Activated CD4-positive, alpha-beta T cell treated with anti-CD3 and anti-CD28 coated beads, Interleukin-2, amount 10 ng/mL, durations not matched to agents 7 days and 5 days (primary cell): ENCODE measurements at regions of chr17 and their contacts with region 1.

Region 1: DNA sequence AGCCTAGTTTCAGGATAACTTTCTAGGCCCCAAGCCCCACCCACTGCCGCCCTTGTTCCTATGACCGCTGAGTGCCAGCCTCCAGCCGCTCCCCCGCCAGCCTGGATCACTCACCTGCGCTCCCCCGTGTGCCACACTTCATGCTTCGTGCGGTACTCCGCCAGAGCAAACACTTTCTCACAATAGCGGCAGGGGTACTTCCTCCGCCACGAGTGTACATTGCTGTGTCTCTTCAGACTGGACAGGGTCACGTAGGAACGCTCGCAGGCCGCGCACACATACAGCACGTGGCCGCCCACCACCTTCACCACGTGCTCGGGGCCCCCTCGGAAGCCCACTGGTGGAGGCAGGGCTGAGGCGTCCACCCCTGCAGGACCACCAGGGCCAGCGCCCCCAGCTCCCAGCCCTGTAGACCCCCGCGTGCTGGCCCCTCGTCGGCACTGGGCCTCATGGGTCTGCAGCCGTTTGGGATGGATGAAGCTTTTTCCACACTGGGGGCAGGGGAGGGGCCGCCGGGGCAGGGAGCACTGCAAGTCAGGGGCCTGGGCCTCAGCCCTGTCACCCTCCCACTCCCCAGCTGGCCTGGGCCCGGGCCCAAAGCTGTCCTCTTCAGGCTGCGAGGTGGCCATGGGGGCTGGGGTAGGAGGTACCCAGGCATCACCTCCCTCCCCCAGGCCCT is 13.7 kb downstream of the ZBTB4 start:
- DNase-seq: no peak
- H3K4me3 Mint-ChIP-seq: no peak overlapping the region
- H3K27ac Mint-ChIP-seq: no peak overlapping the region
- H3K4me1 Mint-ChIP-seq: peaks cover 16% of the 10 kb centered on the region
- H3K27me3 Mint-ChIP-seq: no peaks in the 10 kb centered on the region

Region 2: DNA sequence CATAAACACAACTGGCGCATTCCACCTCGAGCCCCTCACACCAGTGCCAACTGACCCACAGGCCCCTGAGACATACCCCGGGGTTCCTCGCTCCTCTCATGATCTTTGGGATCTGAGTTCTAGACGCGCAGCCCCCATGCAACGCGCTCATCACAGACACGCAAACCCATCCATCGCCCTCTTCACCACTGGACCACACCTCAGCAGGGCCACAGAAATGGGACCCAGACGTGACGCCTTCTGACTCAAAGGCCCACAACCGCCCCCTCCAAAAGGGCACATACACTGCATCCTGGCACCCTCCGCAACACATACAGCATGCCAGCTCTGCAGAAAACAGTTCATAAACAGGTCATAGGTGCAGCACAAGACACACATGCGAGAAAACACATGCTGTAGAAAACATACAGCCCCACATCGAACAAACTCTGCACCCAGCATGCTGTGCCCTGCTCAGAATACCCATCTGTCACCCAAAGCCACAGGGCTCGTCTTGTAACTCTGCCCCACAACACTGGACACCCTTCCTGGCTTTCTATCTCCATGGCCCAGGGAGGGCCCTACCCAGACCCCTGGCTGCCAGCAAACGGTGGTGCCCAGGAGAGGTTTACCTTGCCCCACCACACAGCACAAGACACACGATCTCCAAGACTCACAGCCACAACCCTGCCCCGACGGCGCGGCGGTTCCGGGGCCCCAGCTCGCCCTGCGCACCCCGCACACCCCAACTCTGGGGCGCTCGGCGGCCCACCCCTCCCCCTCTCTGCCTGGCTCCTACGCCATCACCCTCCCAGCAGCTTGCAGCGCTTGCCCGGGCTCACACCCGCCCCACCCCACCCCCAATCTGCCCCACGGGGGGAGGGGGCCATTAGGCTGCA is 12.8 kb after region 1 on chr17:
- CTCF ChIA-PET with region 1: interaction called, 13 read pairs
- POLR2A ChIA-PET with region 1: no interaction called
- DNase-seq: peak; percentile 68
- H3K4me3 Mint-ChIP-seq: peak overlapping the region; percentile 84
- H3K27ac Mint-ChIP-seq: peak overlapping the region; percentile 77
- H3K4me1 Mint-ChIP-seq: peaks cover 68% of the 10 kb centered on the region
- H3K27me3 Mint-ChIP-seq: no peaks in the 10 kb centered on the region